Naive thymus-derived CD8-positive, alpha-beta T cell (primary cell): ENCODE measurements at regions of chr2 and their contacts with region 1.

Region 1: DNA sequence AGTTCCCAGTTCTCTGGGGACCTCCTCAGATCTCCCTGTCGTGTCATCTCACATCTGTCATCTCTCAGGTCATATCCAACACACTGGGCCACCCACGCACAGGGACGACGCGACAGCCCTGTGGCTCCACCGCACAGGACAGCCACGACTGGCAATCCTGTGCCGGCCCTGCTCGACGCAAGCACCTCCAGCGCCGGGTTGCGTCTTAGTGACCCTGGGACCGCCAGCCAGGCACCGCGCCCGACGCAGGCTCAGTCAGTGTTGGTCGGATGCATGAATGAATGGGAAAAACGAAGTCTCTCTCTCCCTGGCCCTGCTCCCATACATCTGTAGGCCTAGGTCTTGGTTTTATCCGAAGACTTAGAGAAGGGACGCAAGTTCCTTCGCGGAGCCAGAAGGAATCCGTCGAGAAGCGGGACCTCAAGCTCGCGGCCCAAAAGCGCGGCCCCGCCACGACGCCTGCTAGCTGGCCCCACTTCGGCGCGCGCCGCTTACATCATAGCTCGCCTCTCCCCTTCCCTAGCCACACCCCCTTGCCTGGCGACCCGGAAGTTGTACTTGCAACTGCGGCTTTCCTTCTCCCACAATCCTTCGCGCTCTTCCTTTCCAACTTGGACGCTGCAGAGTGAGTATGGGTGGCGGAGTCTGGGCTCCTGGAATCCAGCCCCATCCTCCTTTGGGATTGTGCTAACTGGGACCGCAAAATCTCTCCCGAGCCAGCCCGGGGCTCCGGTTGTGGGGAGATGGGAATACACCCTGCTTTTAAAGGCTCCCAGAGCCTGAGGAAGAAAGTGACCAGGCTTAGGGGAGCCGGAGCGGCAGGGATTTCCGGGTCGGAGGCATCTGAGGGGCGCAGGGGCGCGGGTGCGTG is at the start of gene RPL31:
- DNase-seq: peak; percentile 88 to 98 (median 94)
- ATAC-seq: peak; percentile 93 to 94
- H3K4me3 Mint-ChIP-seq: peak within 1 kb of the TSS; percentile 82 to 97 (median 94)
- H3K27ac Mint-ChIP-seq: peak within 1 kb of the TSS; percentile 74 to 99 (median 98)
- H3K4me1 Mint-ChIP-seq: peaks cover 27 to 53% (median 47%) of the 10 kb centered on the region in 4 donors
- H3K27me3 Mint-ChIP-seq: no peaks in the 10 kb centered on the region
- polyA plus RNA-seq, gene RPL31: 7,517 to 8,494 (median 8,327) TPM

Region 2: DNA sequence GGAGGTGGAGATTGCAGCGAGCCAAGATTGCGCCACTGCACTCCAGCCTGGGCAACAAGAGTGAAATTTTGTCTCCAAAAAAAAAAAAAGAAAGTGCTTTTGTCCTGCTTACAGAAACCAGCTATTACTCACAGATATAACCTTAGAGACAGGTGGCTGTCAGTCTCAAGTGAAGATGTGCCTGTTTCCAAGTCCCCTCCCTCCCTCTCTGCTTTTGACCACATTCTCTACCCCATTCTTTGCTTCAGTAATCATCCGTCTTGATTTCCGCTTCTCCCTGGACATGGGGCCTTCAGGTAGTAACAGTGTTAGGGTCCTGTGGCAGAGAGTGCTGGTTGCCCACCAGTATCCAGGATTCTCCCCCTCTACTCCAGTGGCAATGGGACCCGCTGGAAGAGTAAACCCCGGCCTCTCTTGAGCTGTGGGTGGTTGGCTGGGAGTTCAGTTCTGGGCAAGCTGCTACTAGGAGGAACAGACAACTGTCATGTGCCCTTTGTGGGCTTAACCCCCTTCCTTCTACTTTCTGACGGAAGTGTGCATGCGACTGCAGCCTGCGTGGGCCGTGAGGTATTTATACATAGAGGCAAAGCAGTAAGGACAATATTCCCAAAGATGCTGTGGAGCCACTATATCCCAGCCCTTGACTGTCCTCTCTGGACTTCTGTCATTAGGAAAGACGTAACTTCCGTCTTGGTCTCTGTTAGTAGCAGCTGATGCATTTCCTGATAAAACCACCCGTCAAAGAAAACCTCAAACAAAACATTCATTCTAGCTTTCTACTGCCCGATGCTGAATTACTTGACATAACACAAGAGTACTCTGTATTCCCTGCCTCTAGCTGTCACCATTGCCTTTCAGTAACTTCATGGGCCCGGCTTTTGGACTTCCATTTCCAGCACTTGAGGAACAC is 421.3 kb before region 1 on chr2:
- POLR2A ChIA-PET with region 1: interaction called, 11 read pairs
- DNase-seq: peak; percentile 23 to 85 (median 74)
- ATAC-seq: peak; percentile 81 to 89
- H3K4me3 Mint-ChIP-seq: peak overlapping the region; percentile 52 to 88 (median 72)
- H3K27ac Mint-ChIP-seq: peak overlapping the region; percentile 92 to 99 (median 98)
- H3K4me1 Mint-ChIP-seq: peaks cover 15 to 49% (median 43%) of the 10 kb centered on the region in 4 donors
- H3K27me3 Mint-ChIP-seq: no peaks in the 10 kb centered on the region

Region 3: GRCh38 chr2:100957996-100958653 is 43.8 kb before region 1 on chr2:
- POLR2A ChIA-PET with region 1: no interaction called
- DNase-seq: no peak
- ATAC-seq: no peak
- H3K4me3 Mint-ChIP-seq: no peak overlapping the region
- H3K27ac Mint-ChIP-seq: peak overlapping the region in 1 of 10 donors; percentile 59
- H3K4me1 Mint-ChIP-seq: peaks cover 0 to 12% (median 5%) of the 10 kb centered on the region in 4 donors
- H3K27me3 Mint-ChIP-seq: peaks cover 0 to 2% (median 0%) of the 10 kb centered on the region in 5 donors

Region 4: GRCh38 chr2:100968146-100969145 is 33.5 kb before region 1 on chr2:
- POLR2A ChIA-PET with region 1: no interaction called
- DNase-seq: no peak
- ATAC-seq: no peak
- H3K4me3 Mint-ChIP-seq: no peak overlapping the region
- H3K27ac Mint-ChIP-seq: no peak overlapping the region
- H3K4me1 Mint-ChIP-seq: peaks cover 0 to 12% (median 4%) of the 10 kb centered on the region in 4 donors
- H3K27me3 Mint-ChIP-seq: peaks cover 0 to 3% (median 0%) of the 10 kb centered on the region in 5 donors

Region 5: GRCh38 chr2:101030863-101031554 is 29.1 kb after region 1 on chr2:
- POLR2A ChIA-PET with region 1: no interaction called
- DNase-seq: no peak
- ATAC-seq: no peak
- H3K4me3 Mint-ChIP-seq: no peak overlapping the region
- H3K27ac Mint-ChIP-seq: no peak overlapping the region
- H3K4me1 Mint-ChIP-seq: no peaks in the 10 kb centered on the region
- H3K27me3 Mint-ChIP-seq: peaks cover 0 to 10% (median 0%) of the 10 kb centered on the region in 5 donors